ENCODE measurements at regions of chr2 and their contacts with region 1.

Region 1: GRCh38 chr2:111116843-111117597 is 3.7 kb upstream of the BCL2L11 start:
- DNase-seq: peak; percentile 55
- H3K4me3 Mint-ChIP-seq: peak overlapping the region; percentile 87
- H3K27ac Mint-ChIP-seq: peak overlapping the region; percentile 91
- H3K4me1 Mint-ChIP-seq: peaks cover 35% of the 10 kb centered on the region
- H3K27me3 Mint-ChIP-seq: peaks cover 35% of the 10 kb centered on the region

Region 2: GRCh38 chr2:110804915-110805314 is 312.1 kb before region 1 on chr2:
- intact Hi-C with region 1: loop called (anchors 2 kb)
- DNase-seq: no peak
- H3K4me3 Mint-ChIP-seq: no peak overlapping the region
- H3K27ac Mint-ChIP-seq: peak overlapping the region; percentile 22
- H3K4me1 Mint-ChIP-seq: peaks cover 16% of the 10 kb centered on the region
- H3K27me3 Mint-ChIP-seq: peaks cover 41% of the 10 kb centered on the region

Region 3: GRCh38 chr2:110847651-110848050 is 269.4 kb before region 1 on chr2:
- intact Hi-C with region 1: loop called (anchors 2 kb)
- DNase-seq: no peak
- H3K4me3 Mint-ChIP-seq: no peak overlapping the region
- H3K27ac Mint-ChIP-seq: peak overlapping the region; percentile 99
- H3K4me1 Mint-ChIP-seq: peaks cover 82% of the 10 kb centered on the region
- H3K27me3 Mint-ChIP-seq: peaks cover 3% of the 10 kb centered on the region

Region 4: GRCh38 chr2:111049792-111050640 is 67.0 kb before region 1 on chr2:
- intact Hi-C with region 1: loop called (anchors 2 kb)
- DNase-seq: no peak
- H3K4me3 Mint-ChIP-seq: peak overlapping the region; percentile 22
- H3K27ac Mint-ChIP-seq: peak overlapping the region; percentile 39
- H3K4me1 Mint-ChIP-seq: peaks cover 47% of the 10 kb centered on the region
- H3K27me3 Mint-ChIP-seq: peaks cover 15% of the 10 kb centered on the region

Region 5: GRCh38 chr2:111100765-111101162 is 16.3 kb before region 1 on chr2:
- intact Hi-C with region 1: loop called (anchors 2 kb)
- DNase-seq: no peak
- H3K4me3 Mint-ChIP-seq: no peak overlapping the region
- H3K27ac Mint-ChIP-seq: peak overlapping the region; percentile 74
- H3K4me1 Mint-ChIP-seq: peaks cover 14% of the 10 kb centered on the region
- H3K27me3 Mint-ChIP-seq: peaks cover 56% of the 10 kb centered on the region

Region 6: DNA sequence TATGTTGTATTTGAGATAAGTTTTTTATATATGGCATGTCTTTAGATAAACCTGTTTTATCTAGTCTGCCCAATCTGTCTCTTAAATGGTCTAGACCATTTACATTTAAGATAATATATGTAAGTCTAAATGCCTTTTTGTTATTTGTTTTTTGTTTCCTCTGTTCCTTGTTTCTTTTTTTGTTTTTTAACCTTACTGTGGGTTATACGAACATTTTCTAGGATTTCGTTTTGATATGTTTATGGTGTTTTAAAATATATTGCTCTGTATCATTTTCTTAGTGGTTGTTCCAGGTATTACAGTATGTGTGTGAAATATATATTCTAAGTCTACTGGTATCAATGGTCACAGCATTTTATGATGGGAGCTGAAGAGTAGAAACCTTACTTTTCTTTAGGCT is 17.0 kb after region 1 on chr2:
- intact Hi-C with region 1: no loop called
- DNase-seq: no peak
- H3K4me3 Mint-ChIP-seq: no peak overlapping the region
- H3K27ac Mint-ChIP-seq: peak overlapping the region; percentile 44
- H3K4me1 Mint-ChIP-seq: peaks cover 38% of the 10 kb centered on the region
- H3K27me3 Mint-ChIP-seq: no peaks in the 10 kb centered on the region

Region 7: DNA sequence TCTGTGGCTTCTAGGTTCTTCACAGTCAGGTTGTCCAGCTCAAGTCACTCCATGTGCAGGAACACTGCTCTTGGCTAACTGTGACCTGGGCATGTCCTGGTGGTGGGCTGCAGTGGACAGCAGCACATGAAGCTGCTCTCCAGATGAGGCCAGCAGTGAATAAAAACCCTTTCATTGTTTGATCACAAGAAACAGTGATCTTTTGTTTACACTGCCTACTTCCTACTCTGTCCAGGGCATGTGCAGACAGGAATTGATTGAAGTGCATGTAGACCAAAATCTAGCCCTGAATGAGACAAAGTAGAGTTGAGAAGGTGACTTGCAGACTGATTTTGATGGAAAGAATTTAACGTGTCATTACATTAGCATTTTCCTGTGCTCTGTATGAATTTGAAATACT is 38.6 kb after region 1 on chr2:
- intact Hi-C with region 1: no loop called
- DNase-seq: no peak
- H3K4me3 Mint-ChIP-seq: no peak overlapping the region
- H3K27ac Mint-ChIP-seq: no peak overlapping the region
- H3K4me1 Mint-ChIP-seq: peaks cover 29% of the 10 kb centered on the region
- H3K27me3 Mint-ChIP-seq: no peaks in the 10 kb centered on the region

Region 8: DNA sequence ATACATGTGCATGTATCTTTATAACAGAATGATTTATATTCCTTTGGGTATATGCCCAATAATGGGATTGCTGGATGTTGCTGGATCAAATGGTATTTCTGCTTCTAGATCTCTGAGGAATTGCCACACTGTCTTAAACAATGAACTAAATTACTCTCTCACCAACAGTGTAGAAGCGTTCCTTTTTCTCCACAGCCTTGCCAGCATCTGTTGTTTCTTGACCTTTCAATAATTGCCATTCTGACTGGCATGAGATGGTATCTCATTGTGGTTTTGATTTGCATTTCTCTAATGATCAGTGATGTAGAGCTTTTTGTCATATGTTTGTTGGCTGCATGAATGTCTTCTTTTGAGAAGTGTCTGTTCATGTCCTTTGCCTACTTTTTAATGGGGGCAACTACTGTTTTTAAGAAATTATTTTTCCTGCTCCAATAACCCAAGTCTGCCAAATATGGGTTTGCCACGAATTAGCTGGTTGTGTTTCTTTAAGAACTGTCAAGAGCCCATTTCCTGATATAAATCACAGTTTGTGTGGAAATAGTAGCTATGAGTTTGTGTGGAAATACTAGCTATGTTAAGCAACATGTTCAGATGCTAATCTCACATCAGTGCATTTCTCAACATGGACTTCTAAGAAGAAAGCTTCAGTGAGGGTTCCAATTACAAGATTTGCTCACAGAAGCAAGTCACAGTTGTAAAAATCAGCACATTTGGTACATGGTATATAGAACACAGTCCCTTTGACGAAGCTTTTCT is 507.6 kb after region 1 on chr2:
- intact Hi-C with region 1: loop called (anchors 5 kb)
- DNase-seq: no peak
- H3K4me3 Mint-ChIP-seq: no peak overlapping the region
- H3K27ac Mint-ChIP-seq: peak overlapping the region; percentile 58
- H3K4me1 Mint-ChIP-seq: peaks cover 36% of the 10 kb centered on the region
- H3K27me3 Mint-ChIP-seq: peaks cover 27% of the 10 kb centered on the region

Region 9: GRCh38 chr2:111698743-111699554 is 581.9 kb after region 1 on chr2:
- intact Hi-C with region 1: loop called (anchors 2 kb)
- DNase-seq: peak; percentile 60
- H3K4me3 Mint-ChIP-seq: peak overlapping the region; percentile 35
- H3K27ac Mint-ChIP-seq: peak overlapping the region; percentile 87
- H3K4me1 Mint-ChIP-seq: peaks cover 43% of the 10 kb centered on the region
- H3K27me3 Mint-ChIP-seq: peaks cover 14% of the 10 kb centered on the region